Heart left ventricle (tissue), 16 donors: ENCODE measurements at regions of chr7 and their contacts with region 1.

Region 1: DNA sequence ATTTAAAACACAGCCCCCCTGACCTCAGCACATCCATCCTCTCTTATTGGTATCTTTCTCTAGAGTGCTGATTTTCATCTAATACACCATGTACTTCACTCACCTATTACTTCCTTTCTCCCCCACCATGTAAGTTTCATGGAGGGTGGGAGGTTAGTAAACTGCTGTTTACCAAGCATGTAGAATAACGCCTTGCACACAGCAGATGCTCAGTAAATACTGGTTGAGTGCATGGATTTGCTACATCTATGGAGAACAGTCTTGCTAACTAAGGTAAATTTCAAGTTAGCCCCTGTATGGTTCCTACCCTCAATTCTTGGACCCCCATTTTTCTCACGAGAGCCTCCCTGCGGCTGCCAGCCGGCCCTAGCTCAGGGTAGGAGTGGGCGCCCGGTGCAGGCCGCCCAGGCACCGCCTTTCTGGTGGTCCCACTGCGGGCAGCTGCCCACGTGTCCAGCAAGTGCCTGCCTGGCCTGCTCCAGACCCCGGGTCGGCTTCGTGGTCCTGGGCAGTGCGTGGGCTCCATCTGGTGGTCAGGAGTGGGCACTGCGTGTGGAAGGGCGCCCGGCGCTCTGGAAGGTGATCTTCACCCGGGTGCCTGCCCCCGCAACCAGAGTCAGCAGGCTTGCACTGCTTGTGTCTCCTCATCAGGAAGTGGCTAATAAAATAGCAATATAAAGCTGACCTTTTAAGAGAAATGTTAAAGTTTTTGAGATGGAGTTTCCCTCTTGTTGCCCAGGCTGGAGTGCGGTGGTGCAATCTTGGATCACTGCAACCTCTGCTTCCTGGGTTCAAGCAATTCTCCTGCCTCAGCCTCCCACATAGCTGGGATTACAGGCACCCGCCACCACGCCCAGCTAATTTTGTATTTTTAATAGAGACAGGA is 63.4 kb upstream of the DNAJB6 start:
- DNase-seq: peak; percentile 58 to 88 (median 70)
- ATAC-seq: peak; percentile 59 to 80 (median 76)
- H3K4me3 ChIP-seq: no peak overlapping the region
- H3K27ac ChIP-seq: peak overlapping the region in 1 of 12 donors; percentile 41
- H3K4me1 ChIP-seq: peaks cover 0 to 63% (median 19%) of the 10 kb centered on the region in 12 donors
- H3K27me3 ChIP-seq: peaks cover 0 to 3% (median 0%) of the 10 kb centered on the region in 9 donors
- CTCF ChIP-seq: peak; percentile 91 to 100 (median 98)
- POLR2A ChIP-seq: no peak

Region 2: GRCh38 chr7:156949541-156950380 is 323.7 kb before region 1 on chr7 and contains the start of gene NOM1:
- intact Hi-C with region 1: loop called in 2 of 10 experiments (anchors 10 kb)
- DNase-seq: peak; percentile 89 to 97 (median 93)
- ATAC-seq: peak; percentile 76 to 99 (median 96)
- H3K4me3 ChIP-seq: peak within 1 kb of the TSS; percentile 81 to 100 (median 92)
- H3K27ac ChIP-seq: peak within 1 kb of the TSS in 11 of 12 donors; percentile 3 to 79 (median 64)
- H3K4me1 ChIP-seq: peaks cover 0 to 33% (median 20%) of the 10 kb centered on the region in 12 donors
- H3K27me3 ChIP-seq: peaks cover 0 to 23% (median 0%) of the 10 kb centered on the region in 9 donors
- CTCF ChIP-seq: peak; percentile 54 to 100 (median 81)
- POLR2A ChIP-seq: peak in 1 of 2 donors; percentile 55
- total RNA-seq, gene NOM1: 6.0 to 12.2 (median 9.1) TPM

Region 3: GRCh38 chr7:156969972-156970420 is 303.5 kb before region 1 on chr7:
- intact Hi-C with region 1: loop called in 4 of 10 experiments (anchors 5 to 10 kb)
- DNase-seq: no peak
- ATAC-seq: no peak
- H3K4me3 ChIP-seq: no peak overlapping the region
- H3K27ac ChIP-seq: no peak overlapping the region
- H3K4me1 ChIP-seq: no peaks in the 10 kb centered on the region
- H3K27me3 ChIP-seq: no peaks in the 10 kb centered on the region
- CTCF ChIP-seq: peak in 9 of 12 donors; percentile 9 to 52 (median 44)
- POLR2A ChIP-seq: no peak

Region 4: DNA sequence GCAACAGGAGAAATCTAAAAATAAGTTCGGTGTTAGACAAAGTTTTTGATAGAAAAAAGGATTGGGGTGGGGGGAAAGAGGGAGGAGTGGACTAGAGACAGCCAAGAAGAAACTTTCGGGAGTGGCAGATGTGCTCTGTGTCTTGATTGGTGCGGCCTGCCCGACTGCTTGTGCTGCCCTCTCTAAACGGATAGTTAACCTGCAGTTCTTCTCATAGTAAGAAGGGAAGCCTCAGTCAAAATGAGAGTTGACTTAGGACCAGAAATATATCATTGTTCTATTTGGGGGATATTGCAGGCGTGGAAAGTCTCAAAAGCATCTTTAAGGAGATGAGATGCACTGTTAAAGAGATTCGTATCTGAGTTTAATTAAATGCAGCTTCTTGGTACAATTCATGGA is 95.5 kb before region 1 on chr7:
- intact Hi-C with region 1: no loop called
- DNase-seq: no peak
- ATAC-seq: no peak
- H3K4me3 ChIP-seq: no peak overlapping the region
- H3K27ac ChIP-seq: no peak overlapping the region
- H3K4me1 ChIP-seq: no peaks in the 10 kb centered on the region
- H3K27me3 ChIP-seq: no peaks in the 10 kb centered on the region
- CTCF ChIP-seq: no peak
- POLR2A ChIP-seq: no peak

Region 5: GRCh38 chr7:157336383-157337315 is 63.2 kb after region 1 on chr7 and contains the start of gene DNAJB6:
- intact Hi-C with region 1: loop called in 4 of 10 experiments (anchors 2 to 5 kb)
- DNase-seq: peak; percentile 94 to 98 (median 95)
- ATAC-seq: peak; percentile 76 to 92 (median 88)
- H3K4me3 ChIP-seq: peak within 1 kb of the TSS; percentile 46 to 99 (median 81)
- H3K27ac ChIP-seq: peak within 1 kb of the TSS; percentile 88 to 100 (median 97)
- H3K4me1 ChIP-seq: peaks cover 7 to 49% (median 32%) of the 10 kb centered on the region in 12 donors
- H3K27me3 ChIP-seq: no peaks in the 10 kb centered on the region
- CTCF ChIP-seq: no peak
- POLR2A ChIP-seq: peak; percentile 78 to 95
- total RNA-seq, gene DNAJB6: 123 to 195 (median 162) TPM

Region 6: GRCh38 chr7:157386979-157387800 is 113.7 kb after region 1 on chr7:
- intact Hi-C with region 1: loop called in 2 of 10 experiments (anchors 10 kb)
- DNase-seq: peak; percentile 85 to 92 (median 90)
- ATAC-seq: peak; percentile 85 to 90 (median 87)
- H3K4me3 ChIP-seq: peak overlapping the region in 1 of 12 donors; percentile 13
- H3K27ac ChIP-seq: peak overlapping the region; percentile 33 to 87 (median 58)
- H3K4me1 ChIP-seq: peaks cover 0 to 49% (median 36%) of the 10 kb centered on the region in 12 donors
- H3K27me3 ChIP-seq: no peaks in the 10 kb centered on the region
- CTCF ChIP-seq: peak; percentile 85 to 96 (median 92)
- POLR2A ChIP-seq: no peak

Region 7: GRCh38 chr7:157397731-157398691 is 124.6 kb after region 1 on chr7:
- intact Hi-C with region 1: loop called in 1 of 10 experiments (anchors 10 kb)
- DNase-seq: peak in 4 of 5 donors; percentile 43 to 72 (median 64)
- ATAC-seq: peak; percentile 68 to 81 (median 76)
- H3K4me3 ChIP-seq: peak overlapping the region in 5 of 12 donors; percentile 0 to 17 (median 9)
- H3K27ac ChIP-seq: peak overlapping the region; percentile 59 to 97 (median 80)
- H3K4me1 ChIP-seq: peaks cover 0 to 70% (median 31%) of the 10 kb centered on the region in 12 donors
- H3K27me3 ChIP-seq: no peaks in the 10 kb centered on the region
- CTCF ChIP-seq: peak; percentile 15 to 65 (median 42)
- POLR2A ChIP-seq: no peak